Right ventricle myocardium inferior (tissue), 1 donor: ENCODE measurements at regions of chr1 and their contacts with region 1.

Region 1: GRCh38 chr1:173714759-173715537 is at the start of gene KLHL20:
- DNase-seq: peak; percentile 82
- ATAC-seq: peak; percentile 98
- total RNA-seq, gene KLHL20: 16.5 TPM

Region 2: DNA sequence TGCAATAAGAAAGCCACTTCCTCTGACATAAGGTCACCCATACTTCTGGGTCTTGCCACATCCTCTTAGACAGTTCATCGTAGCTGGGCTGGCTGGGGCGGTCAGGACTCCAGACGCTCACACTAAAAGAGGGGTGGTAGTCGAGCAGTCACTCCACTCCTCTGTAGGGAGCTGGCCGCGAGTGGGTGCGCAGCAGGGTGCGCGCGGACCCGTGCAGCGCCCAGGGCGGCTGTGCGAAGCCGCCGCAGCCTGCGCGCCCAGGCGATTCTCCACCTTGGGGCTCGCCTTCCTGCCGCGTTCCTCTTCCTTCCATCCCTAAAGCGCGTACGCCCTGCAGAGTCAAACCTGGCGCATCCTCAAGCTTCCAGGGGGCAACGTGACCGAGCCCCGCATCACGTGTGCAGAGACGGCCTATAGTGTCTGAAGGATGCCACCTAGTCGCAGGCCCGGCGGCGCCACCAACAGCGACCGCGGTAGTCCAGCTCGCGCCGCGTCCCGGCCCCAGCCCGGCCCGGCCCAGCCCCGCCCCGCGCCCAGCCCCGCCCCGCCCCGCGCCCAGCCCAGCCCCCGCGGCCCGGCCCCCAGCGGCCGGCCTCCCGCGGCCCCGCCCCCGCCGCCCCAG is 238.2 kb before region 1 on chr1:
- intact Hi-C with region 1: loop called (anchors 2 kb)
- DNase-seq: peak; percentile 97
- ATAC-seq: peak; percentile 93

Region 3: DNA sequence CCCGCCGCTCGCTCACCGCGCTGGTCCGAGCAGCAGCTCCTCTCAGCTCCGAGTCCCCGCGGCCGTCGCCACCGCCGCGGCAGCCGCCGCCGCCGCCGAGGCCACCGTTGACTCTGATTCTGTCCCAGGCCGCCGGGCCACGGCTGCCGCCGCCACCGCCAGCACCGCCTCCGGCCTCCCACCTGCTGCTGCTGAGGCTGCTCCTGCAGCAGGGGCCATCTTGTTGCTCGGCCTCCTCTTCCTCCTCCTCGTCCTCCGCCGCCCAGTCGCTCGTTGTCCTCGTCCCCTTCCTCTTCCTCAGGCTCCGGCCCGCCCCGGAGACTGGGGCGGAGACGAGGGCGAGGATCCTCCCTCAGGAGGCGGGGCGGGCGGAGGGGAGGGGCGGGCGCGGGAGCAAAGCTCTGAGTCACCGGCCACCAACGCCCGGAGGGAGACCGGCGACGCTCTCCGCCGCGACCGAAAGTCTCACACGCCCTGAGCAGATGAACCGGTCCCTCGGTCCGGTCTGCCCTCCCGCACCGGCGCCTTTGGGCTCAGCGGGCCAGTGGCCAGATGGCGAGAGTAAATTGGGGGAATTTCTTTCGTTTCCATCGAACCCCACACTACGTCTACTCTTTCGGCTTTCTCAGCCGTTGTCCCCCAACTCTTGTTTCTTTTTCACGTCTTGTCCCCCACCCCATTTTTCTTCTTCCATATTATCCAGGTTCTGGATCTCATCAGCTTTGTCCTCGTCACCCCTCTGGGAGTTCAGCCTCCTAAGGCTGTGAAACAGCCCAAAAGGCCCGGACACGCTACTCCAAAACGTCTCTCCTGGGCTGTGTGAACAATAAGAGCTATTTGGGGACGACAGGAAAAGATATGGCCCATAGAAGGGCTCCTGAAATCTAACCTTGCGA is 307.4 kb after region 1 on chr1 and contains the start of gene RC3H1:
- intact Hi-C with region 1: no loop called
- DNase-seq: peak; percentile 97
- ATAC-seq: peak; percentile 98
- total RNA-seq, gene RC3H1: 20.2 TPM